CD8-positive, alpha-beta T cell (primary cell): ENCODE measurements at regions of chr4 and their contacts with region 1.

Region 1: GRCh38 chr4:26330186-26330787 is 9.5 kb downstream of the RBPJ start:
- DNase-seq: peak in 3 of 9 experiments; percentile 16 to 73 (median 64)
- ATAC-seq: peak; percentile 86
- H3K4me3 ChIP-seq: no peak overlapping the region
- H3K4me3 Mint-ChIP-seq: no peak overlapping the region
- H3K27ac ChIP-seq: no peak overlapping the region
- H3K27ac Mint-ChIP-seq: no peak overlapping the region
- H3K4me1 ChIP-seq: no peaks in the 10 kb centered on the region
- H3K4me1 Mint-ChIP-seq: peaks cover 48% of the 10 kb centered on the region
- H3K27me3 ChIP-seq: no peaks in the 10 kb centered on the region
- H3K27me3 Mint-ChIP-seq: no peaks in the 10 kb centered on the region
- CTCF ChIP-seq: peak; percentile 88

Region 2: GRCh38 chr4:25993395-25994185 is 336.7 kb before region 1 on chr4:
- CTCF ChIA-PET with region 1: interaction called, 13 read pairs
- POLR2A ChIA-PET with region 1: no interaction called
- intact Hi-C with region 1: loop called (anchors 1 to 5 kb)
- DNase-seq: peak in 2 of 9 experiments; percentile 8 to 20
- ATAC-seq: no peak
- H3K4me3 ChIP-seq: no peak overlapping the region
- H3K4me3 Mint-ChIP-seq: no peak overlapping the region
- H3K27ac ChIP-seq: no peak overlapping the region
- H3K27ac Mint-ChIP-seq: no peak overlapping the region
- H3K4me1 ChIP-seq: no peaks in the 10 kb centered on the region
- H3K4me1 Mint-ChIP-seq: peaks cover 3% of the 10 kb centered on the region
- H3K27me3 ChIP-seq: peaks cover 0 to 2% of the 10 kb centered on the region in 2 experiments
- H3K27me3 Mint-ChIP-seq: no peaks in the 10 kb centered on the region
- CTCF ChIP-seq: no peak

Region 3: GRCh38 chr4:26081795-26082498 is 248.3 kb before region 1 on chr4:
- CTCF ChIA-PET with region 1: interaction called, 28 read pairs
- POLR2A ChIA-PET with region 1: no interaction called
- intact Hi-C with region 1: loop called (anchors 1 to 2 kb)
- DNase-seq: peak in 2 of 9 experiments; percentile 58 to 66
- ATAC-seq: no peak
- H3K4me3 ChIP-seq: no peak overlapping the region
- H3K4me3 Mint-ChIP-seq: no peak overlapping the region
- H3K27ac ChIP-seq: no peak overlapping the region
- H3K27ac Mint-ChIP-seq: no peak overlapping the region
- H3K4me1 ChIP-seq: no peaks in the 10 kb centered on the region
- H3K4me1 Mint-ChIP-seq: peaks cover 4% of the 10 kb centered on the region
- H3K27me3 ChIP-seq: no peaks in the 10 kb centered on the region
- H3K27me3 Mint-ChIP-seq: peaks cover 17% of the 10 kb centered on the region
- CTCF ChIP-seq: peak; percentile 53

Region 4: GRCh38 chr4:26342328-26343037 is 12.2 kb after region 1 on chr4:
- CTCF ChIA-PET with region 1: interaction called, 32 read pairs
- POLR2A ChIA-PET with region 1: interaction called, 3 read pairs
- intact Hi-C with region 1: no loop called
- DNase-seq: no peak
- ATAC-seq: no peak
- H3K4me3 ChIP-seq: no peak overlapping the region
- H3K4me3 Mint-ChIP-seq: no peak overlapping the region
- H3K27ac ChIP-seq: no peak overlapping the region
- H3K27ac Mint-ChIP-seq: no peak overlapping the region
- H3K4me1 ChIP-seq: peaks cover 5% of the 10 kb centered on the region
- H3K4me1 Mint-ChIP-seq: peaks cover 56% of the 10 kb centered on the region
- H3K27me3 ChIP-seq: no peaks in the 10 kb centered on the region
- H3K27me3 Mint-ChIP-seq: no peaks in the 10 kb centered on the region
- CTCF ChIP-seq: no peak

Region 5: DNA sequence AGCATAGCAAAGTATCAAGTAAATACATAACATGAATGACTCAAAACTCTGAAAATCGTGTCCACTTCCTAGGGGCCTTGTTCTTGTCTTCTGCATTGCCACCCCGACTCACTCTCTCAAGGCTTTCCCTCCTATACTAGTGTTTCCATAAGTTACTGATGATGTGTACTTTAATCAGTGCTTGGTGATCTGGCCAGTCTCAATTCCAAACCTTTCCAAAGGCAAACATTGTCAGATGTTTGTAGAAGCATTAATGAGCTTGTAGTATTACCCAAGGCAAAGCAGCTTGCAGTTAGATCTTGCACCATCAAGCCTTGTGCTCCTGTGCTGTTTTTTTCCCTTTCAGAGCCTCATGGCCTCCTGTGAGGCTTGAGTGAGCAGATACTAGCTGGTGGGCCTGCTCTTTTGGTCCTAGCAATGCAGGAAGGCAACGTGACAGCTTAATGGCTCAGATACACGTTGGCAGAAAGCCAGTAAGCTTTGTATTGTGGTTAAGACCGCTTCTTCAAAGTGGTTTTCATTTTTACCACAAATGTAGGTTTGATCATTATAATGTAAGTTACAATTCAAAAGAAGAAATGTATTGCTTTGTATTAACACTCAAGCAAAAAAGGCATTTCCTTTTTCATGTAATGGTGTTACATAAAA is 42.4 kb after region 1 on chr4:
- CTCF ChIA-PET with region 1: interaction called, 6 read pairs
- POLR2A ChIA-PET with region 1: interaction called, 3 read pairs
- intact Hi-C with region 1: loop called (anchors 5 kb)
- DNase-seq: peak; percentile 13 to 84 (median 43)
- ATAC-seq: peak; percentile 81
- H3K4me3 ChIP-seq: no peak overlapping the region
- H3K4me3 Mint-ChIP-seq: no peak overlapping the region
- H3K27ac ChIP-seq: no peak overlapping the region
- H3K27ac Mint-ChIP-seq: no peak overlapping the region
- H3K4me1 ChIP-seq: peaks cover 16% of the 10 kb centered on the region
- H3K4me1 Mint-ChIP-seq: peaks cover 34% of the 10 kb centered on the region
- H3K27me3 ChIP-seq: peaks cover 0 to 2% of the 10 kb centered on the region in 2 experiments
- H3K27me3 Mint-ChIP-seq: peaks cover 2% of the 10 kb centered on the region
- CTCF ChIP-seq: no peak

Region 6: DNA sequence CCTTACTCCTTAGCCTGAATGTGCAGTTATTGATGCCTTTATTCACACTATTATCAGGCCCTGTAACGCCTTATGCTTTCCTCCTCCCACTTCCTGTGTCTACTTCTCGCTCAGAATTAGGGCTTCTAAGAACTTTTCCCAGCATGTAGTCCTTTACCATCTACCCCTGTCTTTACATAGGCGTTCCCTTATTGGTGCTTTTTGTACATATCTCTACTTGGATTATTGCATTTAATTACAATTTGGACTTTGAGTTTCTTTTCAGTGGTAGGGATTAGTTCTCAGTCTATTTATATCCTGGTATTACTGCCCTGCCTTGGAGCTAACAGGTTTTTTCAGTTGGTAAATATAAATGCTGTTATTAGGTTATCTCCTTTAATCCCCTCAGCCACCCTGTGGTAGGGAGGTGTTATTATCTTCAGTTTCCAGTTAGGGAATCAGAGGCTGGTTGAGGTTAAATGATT is 74.5 kb after region 1 on chr4:
- CTCF ChIA-PET with region 1: interaction called, 107 read pairs
- POLR2A ChIA-PET with region 1: interaction called, 3 read pairs
- intact Hi-C with region 1: no loop called
- DNase-seq: no peak
- ATAC-seq: no peak
- H3K4me3 ChIP-seq: no peak overlapping the region
- H3K4me3 Mint-ChIP-seq: no peak overlapping the region
- H3K27ac ChIP-seq: no peak overlapping the region
- H3K27ac Mint-ChIP-seq: no peak overlapping the region
- H3K4me1 ChIP-seq: no peaks in the 10 kb centered on the region
- H3K4me1 Mint-ChIP-seq: peaks cover 6% of the 10 kb centered on the region
- H3K27me3 ChIP-seq: no peaks in the 10 kb centered on the region
- H3K27me3 Mint-ChIP-seq: no peaks in the 10 kb centered on the region
- CTCF ChIP-seq: no peak